ENCODE measurements at regions of chr5 and their contacts with region 1.

Region 1: GRCh38 chr5:137735555-137736284 is at the start of gene KLHL3:
- DNase-seq: peak; percentile 64
- ATAC-seq: peak; percentile 57
- H3K4me3 Mint-ChIP-seq: no peak within 1 kb of the TSS
- H3K27ac Mint-ChIP-seq: no peak within 1 kb of the TSS
- H3K4me1 Mint-ChIP-seq: peaks cover 38% of the 10 kb centered on the region
- H3K27me3 Mint-ChIP-seq: no peaks in the 10 kb centered on the region
- total RNA-seq, gene KLHL3: 16.3 to 21.2 TPM

Region 2: GRCh38 chr5:137695651-137696428 is 39.9 kb before region 1 on chr5:
- POLR2A ChIA-PET with region 1: interaction called, 20 read pairs
- DNase-seq: peak; percentile 49
- ATAC-seq: peak; percentile 75
- H3K4me3 Mint-ChIP-seq: peak overlapping the region; percentile 61
- H3K27ac Mint-ChIP-seq: peak overlapping the region; percentile 92
- H3K4me1 Mint-ChIP-seq: peaks cover 27% of the 10 kb centered on the region
- H3K27me3 Mint-ChIP-seq: no peaks in the 10 kb centered on the region